CD8-positive, alpha-beta T cell (primary cell): ENCODE measurements at regions of chr19 and their contacts with region 1.

Region 1: GRCh38 chr19:41641879-41642485 is 15.1 kb upstream of the CEACAM4 start:
- DNase-seq: peak; percentile 36 to 82 (median 71)
- ATAC-seq: peak; percentile 66
- H3K4me3 ChIP-seq: no peak overlapping the region
- H3K4me3 Mint-ChIP-seq: no peak overlapping the region
- H3K27ac ChIP-seq: no peak overlapping the region
- H3K27ac Mint-ChIP-seq: no peak overlapping the region
- H3K4me1 ChIP-seq: peaks cover 21% of the 10 kb centered on the region
- H3K4me1 Mint-ChIP-seq: peaks cover 19% of the 10 kb centered on the region
- H3K27me3 ChIP-seq: no peaks in the 10 kb centered on the region
- H3K27me3 Mint-ChIP-seq: peaks cover 20% of the 10 kb centered on the region
- CTCF ChIP-seq: peak; percentile 95

Region 2: DNA sequence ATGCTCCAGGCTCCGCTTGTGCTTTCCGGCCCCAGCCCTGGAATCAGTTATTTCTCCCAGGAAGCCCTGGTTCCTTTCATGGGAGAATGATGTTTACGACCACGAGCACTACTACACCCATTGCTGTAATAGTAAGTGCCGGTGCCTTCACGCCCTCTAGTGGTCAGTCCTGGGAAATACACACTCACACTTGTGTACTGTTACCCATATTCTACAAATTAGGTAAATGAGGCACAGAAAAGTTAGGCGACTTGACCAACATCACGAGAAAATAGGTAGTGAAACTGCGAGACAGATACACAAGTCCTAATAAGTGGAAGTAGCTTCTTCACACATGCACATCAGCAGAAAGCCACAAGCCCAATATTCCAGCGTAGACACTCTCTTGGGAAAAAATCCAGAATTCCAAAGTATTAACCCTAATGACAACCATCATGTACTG is 44.4 kb before region 1 on chr19:
- CTCF ChIA-PET with region 1: interaction called, 18 read pairs
- POLR2A ChIA-PET with region 1: no interaction called
- intact Hi-C with region 1: no loop called
- DNase-seq: peak; percentile 52 to 84 (median 73)
- ATAC-seq: peak; percentile 86
- H3K4me3 ChIP-seq: no peak overlapping the region
- H3K4me3 Mint-ChIP-seq: no peak overlapping the region
- H3K27ac ChIP-seq: no peak overlapping the region
- H3K27ac Mint-ChIP-seq: no peak overlapping the region
- H3K4me1 ChIP-seq: no peaks in the 10 kb centered on the region
- H3K4me1 Mint-ChIP-seq: peaks cover 6% of the 10 kb centered on the region
- H3K27me3 ChIP-seq: no peaks in the 10 kb centered on the region
- H3K27me3 Mint-ChIP-seq: peaks cover 42% of the 10 kb centered on the region
- CTCF ChIP-seq: peak; percentile 92

Region 3: DNA sequence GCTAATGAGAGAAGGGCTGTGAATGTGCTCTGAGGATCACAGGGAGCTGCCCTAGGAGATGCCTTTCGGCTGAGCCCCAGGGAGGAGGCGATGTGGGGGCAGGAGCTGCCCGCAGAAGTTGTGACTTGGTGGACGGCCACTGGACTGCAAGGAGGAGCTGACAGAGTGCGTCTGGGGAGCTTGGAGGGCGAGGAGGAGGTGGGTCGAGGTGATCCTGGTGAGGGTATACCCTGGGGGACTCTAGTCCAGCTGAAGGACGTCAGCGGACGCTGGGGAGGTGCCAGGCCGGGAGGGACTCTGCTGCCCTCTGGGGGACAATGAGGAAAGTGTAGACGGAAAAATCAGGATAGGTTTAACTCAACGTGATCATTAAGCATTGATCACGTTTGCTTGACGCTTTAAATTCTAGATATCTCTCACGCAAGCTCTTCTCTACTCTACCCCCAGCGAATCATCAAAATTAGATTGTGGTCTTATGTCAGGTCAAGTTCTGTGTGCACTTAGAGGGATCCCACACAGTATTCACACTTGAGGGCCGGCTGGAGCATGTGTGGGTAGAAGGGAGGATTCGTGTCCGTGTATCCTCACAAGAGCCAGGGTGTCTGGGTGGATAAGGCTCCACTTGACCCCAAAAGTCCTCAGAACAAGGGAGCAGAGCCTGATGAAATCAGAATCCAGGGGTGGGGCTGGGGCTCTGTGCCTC is 49.4 kb after region 1 on chr19:
- CTCF ChIA-PET with region 1: interaction called, 26 read pairs
- POLR2A ChIA-PET with region 1: no interaction called
- intact Hi-C with region 1: loop called (anchors 5 to 10 kb)
- DNase-seq: peak in 4 of 9 experiments; percentile 27 to 45 (median 43)
- ATAC-seq: no peak
- H3K4me3 ChIP-seq: no peak overlapping the region
- H3K4me3 Mint-ChIP-seq: no peak overlapping the region
- H3K27ac ChIP-seq: no peak overlapping the region
- H3K27ac Mint-ChIP-seq: no peak overlapping the region
- H3K4me1 ChIP-seq: no peaks in the 10 kb centered on the region
- H3K4me1 Mint-ChIP-seq: no peaks in the 10 kb centered on the region
- H3K27me3 ChIP-seq: peaks cover 0 to 7% of the 10 kb centered on the region in 2 experiments
- H3K27me3 Mint-ChIP-seq: peaks cover 37% of the 10 kb centered on the region
- CTCF ChIP-seq: peak; percentile 49

Region 4: DNA sequence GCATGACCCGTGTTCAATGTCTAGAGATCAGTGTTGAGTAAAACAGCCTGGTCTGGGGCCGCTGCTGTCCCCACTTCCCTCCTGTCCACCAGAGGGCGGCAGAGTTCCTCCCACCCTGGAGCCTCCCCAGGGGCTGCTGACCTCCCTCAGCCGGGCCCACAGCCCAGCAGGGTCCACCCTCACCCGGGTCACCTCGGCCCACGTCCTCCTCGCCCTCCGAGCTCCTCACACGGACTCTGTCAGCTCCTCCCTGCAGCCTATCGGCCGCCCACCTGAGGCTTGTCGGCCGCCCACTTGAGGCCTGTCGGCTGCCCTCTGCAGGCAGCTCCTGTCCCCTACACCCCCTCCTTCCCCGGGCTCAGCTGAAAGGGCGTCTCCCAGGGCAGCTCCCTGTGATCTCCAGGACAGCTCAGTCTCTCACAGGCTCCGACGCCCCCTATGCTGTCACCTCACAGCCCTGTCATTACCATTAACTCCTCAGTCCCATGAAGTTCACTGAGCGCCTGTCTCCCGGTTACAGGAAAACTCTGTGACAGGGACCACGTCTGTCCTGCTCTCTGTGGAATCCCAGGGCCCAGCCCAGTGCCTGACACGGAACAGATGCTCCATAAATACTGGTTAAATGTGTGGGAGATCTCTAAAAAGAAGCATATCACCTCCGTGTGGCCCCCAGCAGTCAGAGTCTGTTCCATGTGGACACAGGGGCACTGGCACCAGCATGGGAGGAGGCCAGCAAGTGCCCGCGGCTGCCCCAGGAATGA is 64.9 kb after region 1 on chr19:
- CTCF ChIA-PET with region 1: interaction called, 10 read pairs
- POLR2A ChIA-PET with region 1: no interaction called
- intact Hi-C with region 1: no loop called
- DNase-seq: peak; percentile 40 to 78 (median 68)
- ATAC-seq: peak; percentile 93
- H3K4me3 ChIP-seq: peak overlapping the region; percentile 31 to 46
- H3K4me3 Mint-ChIP-seq: peak overlapping the region; percentile 65
- H3K27ac ChIP-seq: no peak overlapping the region
- H3K27ac Mint-ChIP-seq: no peak overlapping the region
- H3K4me1 ChIP-seq: no peaks in the 10 kb centered on the region
- H3K4me1 Mint-ChIP-seq: peaks cover 5% of the 10 kb centered on the region
- H3K27me3 ChIP-seq: peaks cover 2 to 13% of the 10 kb centered on the region in 2 experiments
- H3K27me3 Mint-ChIP-seq: peaks cover 36% of the 10 kb centered on the region
- CTCF ChIP-seq: peak; percentile 99

Region 5: GRCh38 chr19:41785653-41786052 is 143.7 kb after region 1 on chr19:
- CTCF ChIA-PET with region 1: no interaction called
- POLR2A ChIA-PET with region 1: no interaction called
- intact Hi-C with region 1: loop called (anchors 5 kb)
- DNase-seq: peak; percentile 43 to 89 (median 71)
- ATAC-seq: peak; percentile 98
- H3K4me3 ChIP-seq: no peak overlapping the region
- H3K4me3 Mint-ChIP-seq: peak overlapping the region; percentile 24
- H3K27ac ChIP-seq: no peak overlapping the region
- H3K27ac Mint-ChIP-seq: no peak overlapping the region
- H3K4me1 ChIP-seq: peaks cover 13% of the 10 kb centered on the region
- H3K4me1 Mint-ChIP-seq: peaks cover 16% of the 10 kb centered on the region
- H3K27me3 ChIP-seq: peaks cover 0 to 8% of the 10 kb centered on the region in 2 experiments
- H3K27me3 Mint-ChIP-seq: peaks cover 51% of the 10 kb centered on the region
- CTCF ChIP-seq: peak; percentile 82

Region 6: DNA sequence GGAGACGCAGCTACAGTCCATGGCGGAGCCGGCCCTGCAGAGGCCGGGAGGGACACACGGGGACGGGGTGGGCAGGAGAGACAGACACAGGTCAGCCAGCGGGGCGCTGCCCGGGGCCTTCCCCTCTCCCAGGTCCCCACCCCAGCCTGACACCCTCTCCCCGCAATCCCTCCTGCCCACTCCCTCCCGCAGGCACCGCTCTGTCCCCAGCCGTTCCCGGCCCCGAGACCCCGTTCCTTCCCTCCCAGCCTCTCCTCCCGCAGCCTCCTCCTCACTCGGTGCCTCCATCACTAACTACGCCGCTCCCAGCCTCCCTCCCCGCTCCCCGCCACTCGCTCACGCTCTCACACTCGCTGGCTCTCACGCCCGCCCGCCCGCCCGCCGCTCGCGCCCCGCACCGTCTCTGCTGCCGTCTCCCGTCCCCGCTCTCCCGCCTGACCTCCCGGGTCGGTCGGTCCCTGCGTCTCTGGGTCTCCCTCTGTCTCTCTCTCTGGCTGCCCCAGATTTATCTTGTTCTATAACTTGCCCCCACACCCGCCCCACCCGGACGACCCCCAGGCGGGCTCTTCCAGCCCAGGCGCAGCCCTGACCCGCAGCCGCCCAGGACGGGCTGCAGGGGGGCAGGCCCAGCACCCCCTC is 271.0 kb after region 1 on chr19:
- CTCF ChIA-PET with region 1: no interaction called
- POLR2A ChIA-PET with region 1: no interaction called
- intact Hi-C with region 1: no loop called
- DNase-seq: peak in 3 of 9 experiments; percentile 50 to 56 (median 54)
- ATAC-seq: peak; percentile 15
- H3K4me3 ChIP-seq: no peak overlapping the region
- H3K4me3 Mint-ChIP-seq: peak overlapping the region; percentile 26
- H3K27ac ChIP-seq: no peak overlapping the region
- H3K27ac Mint-ChIP-seq: no peak overlapping the region
- H3K4me1 ChIP-seq: peaks cover 70% of the 10 kb centered on the region
- H3K4me1 Mint-ChIP-seq: peaks cover 43% of the 10 kb centered on the region
- H3K27me3 ChIP-seq: peaks cover 0 to 52% of the 10 kb centered on the region in 2 experiments
- H3K27me3 Mint-ChIP-seq: peaks cover 3% of the 10 kb centered on the region
- CTCF ChIP-seq: no peak